ENCODE measurements at regions of chr7 and their contacts with region 1.

Region 1: GRCh38 chr7:142960955-142961512 is 1.1 kb downstream of the KEL start:
- DNase-seq: peak; percentile 71 to 77 (median 74)
- ATAC-seq: peak; percentile 69
- H3K4me3 ChIP-seq: peak overlapping the region; percentile 56
- H3K27ac ChIP-seq: peak overlapping the region; percentile 74; the same call in 1 of the 3 replicates
- H3K4me1 ChIP-seq: peaks cover 44 to 79% of the 10 kb centered on the region in 2 experiments
- H3K27me3 ChIP-seq: no peaks in the 10 kb centered on the region
- CTCF ChIP-seq: peak; percentile 85 to 89 (median 87)
- EP300 ChIP-seq: no peak
- POLR2A ChIP-seq: no peak
- RAD21 ChIP-seq: peak; percentile 54 to 82

Region 2: DNA sequence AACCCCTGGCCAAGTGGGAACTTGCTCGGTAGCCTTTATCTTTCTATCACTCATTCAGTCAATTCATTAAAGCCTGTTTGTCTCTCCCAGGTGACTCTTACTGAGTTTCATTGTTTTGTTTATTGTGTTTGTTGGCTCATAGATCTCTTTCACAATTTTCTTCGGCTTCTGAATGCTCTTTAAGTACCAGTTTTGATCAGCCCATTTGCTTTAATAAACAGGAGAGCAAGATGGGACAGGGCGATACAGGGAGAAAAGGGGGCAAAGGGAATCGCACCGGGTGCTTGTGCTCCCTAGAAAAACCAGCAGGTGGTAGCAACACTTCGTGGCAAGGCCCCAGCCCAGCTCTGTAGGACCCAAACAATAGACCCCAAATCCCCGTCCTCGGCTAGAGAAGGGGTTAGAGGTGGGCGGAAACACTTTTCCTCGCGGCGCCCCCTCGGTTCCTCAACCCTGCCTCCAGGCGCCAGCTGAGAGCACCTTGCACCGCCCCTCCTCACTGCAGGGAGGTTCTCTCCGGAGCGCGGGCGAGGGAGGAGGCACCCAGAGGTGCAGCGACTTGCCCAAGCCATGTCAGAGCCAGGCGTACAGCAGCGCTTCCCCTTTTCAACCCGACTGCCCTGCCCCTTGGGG is 107.2 kb before region 1 on chr7:
- CTCF ChIA-PET with region 1: interaction called, 3 read pairs
- POLR2A ChIA-PET with region 1: no interaction called
- in situ Hi-C with region 1: no loop called
- intact Hi-C with region 1: loop called (anchors 1 kb)
- DNase-seq: peak; percentile 74 to 88 (median 80)
- ATAC-seq: peak; percentile 82
- H3K4me3 ChIP-seq: peak overlapping the region; percentile 70
- H3K27ac ChIP-seq: no peak overlapping the region; the same call in 2 of the 3 replicates
- H3K4me1 ChIP-seq: peaks cover 7 to 16% of the 10 kb centered on the region in 2 experiments; a peak in 3 of 5 replicates
- H3K27me3 ChIP-seq: peaks cover 4 to 26% of the 10 kb centered on the region in 2 experiments; a peak in 3 of 5 replicates
- CTCF ChIP-seq: peak; percentile 92 to 95 (median 93)
- EP300 ChIP-seq: no peak
- POLR2A ChIP-seq: no peak
- RAD21 ChIP-seq: peak; percentile 89 to 94

Region 3: GRCh38 chr7:142873281-142873787 is 87.7 kb before region 1 on chr7:
- CTCF ChIA-PET with region 1: no interaction called
- POLR2A ChIA-PET with region 1: no interaction called
- in situ Hi-C with region 1: no loop called
- intact Hi-C with region 1: loop called (anchors 2 kb)
- DNase-seq: peak; percentile 72 to 93 (median 88)
- ATAC-seq: peak; percentile 92
- H3K4me3 ChIP-seq: no peak overlapping the region
- H3K27ac ChIP-seq: no peak overlapping the region
- H3K4me1 ChIP-seq: peaks cover 0 to 10% of the 10 kb centered on the region in 2 experiments; a peak in 1 of 5 replicates
- H3K27me3 ChIP-seq: peaks cover 12 to 72% of the 10 kb centered on the region in 2 experiments
- CTCF ChIP-seq: peak; percentile 89 to 96 (median 94)
- EP300 ChIP-seq: no peak
- POLR2A ChIP-seq: no peak
- RAD21 ChIP-seq: peak; percentile 53 to 79

Region 4: DNA sequence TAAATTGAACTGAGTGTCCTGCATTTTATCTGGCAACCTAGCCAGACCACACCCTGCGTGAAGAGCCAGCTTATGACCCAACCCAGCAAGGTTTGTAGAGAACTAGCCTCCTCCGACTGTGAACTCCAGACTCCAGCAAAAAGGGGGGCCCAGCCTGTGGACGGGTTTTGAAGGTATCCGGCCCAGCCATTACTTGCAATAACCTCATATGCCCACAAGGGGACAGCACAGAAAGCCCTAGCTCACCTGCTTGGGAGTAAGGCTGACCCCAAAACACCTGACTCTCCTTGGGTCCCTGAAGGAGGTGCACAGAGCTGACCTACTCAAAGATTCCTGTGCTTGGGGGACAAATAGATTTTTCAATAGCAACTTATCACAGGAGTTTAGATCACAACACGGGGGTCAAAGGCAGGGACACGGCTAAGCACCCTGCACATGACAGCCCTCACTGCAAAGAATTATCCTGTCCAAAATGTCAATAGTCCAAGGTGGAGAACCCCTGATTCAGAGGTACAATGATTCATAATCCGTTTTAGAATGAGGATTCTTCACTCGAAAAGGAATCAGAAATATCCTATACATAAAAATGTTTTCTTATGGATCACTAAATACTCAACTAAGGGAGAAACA is 80.0 kb before region 1 on chr7:
- CTCF ChIA-PET with region 1: interaction called, 15 read pairs
- POLR2A ChIA-PET with region 1: no interaction called
- in situ Hi-C with region 1: no loop called
- intact Hi-C with region 1: loop called (anchors 1 kb)
- DNase-seq: peak; percentile 76 to 87 (median 84)
- ATAC-seq: peak; percentile 82
- H3K4me3 ChIP-seq: no peak overlapping the region
- H3K27ac ChIP-seq: no peak overlapping the region
- H3K4me1 ChIP-seq: peaks cover 0 to 4% of the 10 kb centered on the region in 2 experiments; a peak in 1 of 5 replicates
- H3K27me3 ChIP-seq: peaks cover 54 to 89% of the 10 kb centered on the region in 2 experiments
- CTCF ChIP-seq: peak; percentile 92 to 98 (median 93)
- EP300 ChIP-seq: no peak
- POLR2A ChIP-seq: no peak
- RAD21 ChIP-seq: peak; percentile 75 to 80

Region 5: GRCh38 chr7:142939226-142939910 is 21.7 kb before region 1 on chr7 and contains the start of gene LLCFC1:
- CTCF ChIA-PET with region 1: no interaction called
- POLR2A ChIA-PET with region 1: interaction called, 8 read pairs
- in situ Hi-C with region 1: no loop called
- intact Hi-C with region 1: loop called (anchors 2 kb)
- DNase-seq: peak; percentile 60 to 75 (median 74)
- ATAC-seq: peak; percentile 88
- H3K4me3 ChIP-seq: no peak within 1 kb of the TSS
- H3K27ac ChIP-seq: no peak within 1 kb of the TSS
- H3K4me1 ChIP-seq: peaks cover 3 to 6% of the 10 kb centered on the region in 2 experiments; a peak in 2 of 5 replicates
- H3K27me3 ChIP-seq: no peaks in the 10 kb centered on the region
- CTCF ChIP-seq: peak; percentile 87 to 98 (median 96)
- EP300 ChIP-seq: no peak
- POLR2A ChIP-seq: no peak
- RAD21 ChIP-seq: peak in 1 of 2 experiments; percentile 38; a peak in 2 of 4 replicates
- polyA plus RNA-seq, gene LLCFC1: not detected

Region 6: DNA sequence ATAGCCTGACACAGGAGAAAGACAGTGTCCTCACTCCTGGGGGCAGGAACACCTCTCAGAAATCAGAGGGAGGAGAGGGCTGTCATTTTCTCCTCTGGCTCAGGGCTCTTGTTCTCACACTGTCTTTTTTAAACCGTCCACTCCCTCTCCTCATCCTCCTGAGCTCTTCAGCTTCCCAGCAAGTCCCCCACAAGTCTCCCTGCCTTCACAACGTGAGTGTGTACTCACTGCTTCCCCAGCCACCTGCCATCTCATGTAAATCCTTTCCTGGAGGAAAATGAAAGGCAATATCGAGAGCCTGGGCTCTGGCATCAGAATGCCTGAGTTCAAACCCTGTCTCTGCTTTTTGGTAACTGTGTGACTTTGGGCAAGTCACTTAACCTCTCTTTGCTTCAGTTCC is 16.0 kb before region 1 on chr7:
- CTCF ChIA-PET with region 1: no interaction called
- POLR2A ChIA-PET with region 1: interaction called, 13 read pairs
- in situ Hi-C with region 1: no loop called
- intact Hi-C with region 1: no loop called
- DNase-seq: no peak
- ATAC-seq: no peak
- H3K4me3 ChIP-seq: no peak overlapping the region
- H3K27ac ChIP-seq: no peak overlapping the region
- H3K4me1 ChIP-seq: no peaks in the 10 kb centered on the region
- H3K27me3 ChIP-seq: no peaks in the 10 kb centered on the region
- CTCF ChIP-seq: no peak
- EP300 ChIP-seq: no peak
- POLR2A ChIP-seq: peak; percentile 35; the same call in 1 of the 2 replicates
- RAD21 ChIP-seq: no peak